ENCODE measurements at regions of chr2 and their contacts with region 1.

Region 1: DNA sequence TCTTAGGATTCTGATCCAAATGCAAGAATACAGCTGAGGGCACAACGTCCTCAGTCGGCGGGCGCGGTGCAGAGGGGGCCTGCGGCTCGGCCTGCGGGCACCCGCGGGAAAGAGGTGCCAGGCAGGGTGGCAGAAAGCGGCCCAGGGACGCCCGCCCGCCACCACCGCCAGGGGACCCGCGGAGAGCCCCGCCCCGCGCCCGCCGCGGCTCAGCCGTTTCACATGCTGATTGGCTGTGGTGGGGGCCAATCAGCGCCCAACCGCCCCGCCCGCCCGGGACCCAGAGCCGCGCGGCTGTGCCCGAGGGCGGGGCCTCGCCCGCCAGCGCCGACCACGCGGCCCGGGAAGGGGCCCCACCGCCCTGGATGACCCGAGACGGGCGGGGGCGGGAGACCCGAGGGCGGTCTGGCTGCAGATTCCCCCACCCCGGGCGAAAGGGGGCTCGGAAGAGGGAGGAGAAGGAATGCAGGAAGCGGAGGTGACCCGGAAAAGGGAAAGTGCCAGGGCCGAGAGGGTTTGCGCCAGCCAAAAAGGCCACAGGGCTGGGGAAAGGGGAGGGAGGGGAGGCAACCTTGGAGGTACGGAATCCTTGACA is 8.0 kb downstream of the IRS1 start:
- DNase-seq: peak; percentile 85
- H3K4me3 ChIP-seq: peak overlapping the region; percentile 79
- CTCF ChIP-seq: peak; percentile 27

Region 2: GRCh38 chr2:225660262-225661131 is 1131.1 kb before region 1 on chr2:
- in situ Hi-C with region 1: loop called (anchors 25 kb)
- DNase-seq: peak; percentile 70
- H3K4me3 ChIP-seq: no peak overlapping the region
- CTCF ChIP-seq: peak; percentile 81

Region 3: DNA sequence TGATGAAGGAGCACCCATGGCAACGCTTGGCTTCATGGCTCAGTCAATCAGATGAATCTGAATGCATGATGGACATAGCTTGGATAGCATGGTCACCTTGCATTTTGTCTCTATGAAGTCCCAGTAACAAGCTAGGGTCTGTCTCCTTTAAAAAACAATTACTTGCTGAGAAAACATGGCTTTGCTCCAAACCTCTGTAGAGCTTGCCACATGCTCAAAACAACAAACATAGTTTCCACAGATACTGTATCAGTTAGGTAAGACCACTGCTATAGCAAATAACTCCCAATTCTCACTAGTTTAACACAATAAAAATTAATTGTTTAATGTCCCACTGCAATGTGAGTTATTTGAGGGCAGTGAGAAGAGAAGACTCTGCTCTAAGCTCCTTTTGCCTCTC is 393.0 kb before region 1 on chr2:
- in situ Hi-C with region 1: no loop called
- DNase-seq: peak; percentile 52
- H3K4me3 ChIP-seq: no peak overlapping the region
- CTCF ChIP-seq: no peak

Region 4: GRCh38 chr2:226649871-226650660 is 141.5 kb before region 1 on chr2:
- in situ Hi-C with region 1: no loop called
- DNase-seq: peak; percentile 99
- H3K4me3 ChIP-seq: no peak overlapping the region
- CTCF ChIP-seq: no peak

Measured in astrocyte of the spinal cord (primary cell).